ENCODE measurements at regions of chr6 and their contacts with region 1.

Region 1: GRCh38 chr6:148464319-148465010 is 121.8 kb downstream of the SASH1 start:
- DNase-seq: peak in 2 of 3 donors; percentile 57 to 81
- ATAC-seq: peak; percentile 75
- H3K4me3 ChIP-seq: no peak overlapping the region
- H3K4me1 ChIP-seq: no peaks in the 10 kb centered on the region
- CTCF ChIP-seq: peak; percentile 85

Region 2: DNA sequence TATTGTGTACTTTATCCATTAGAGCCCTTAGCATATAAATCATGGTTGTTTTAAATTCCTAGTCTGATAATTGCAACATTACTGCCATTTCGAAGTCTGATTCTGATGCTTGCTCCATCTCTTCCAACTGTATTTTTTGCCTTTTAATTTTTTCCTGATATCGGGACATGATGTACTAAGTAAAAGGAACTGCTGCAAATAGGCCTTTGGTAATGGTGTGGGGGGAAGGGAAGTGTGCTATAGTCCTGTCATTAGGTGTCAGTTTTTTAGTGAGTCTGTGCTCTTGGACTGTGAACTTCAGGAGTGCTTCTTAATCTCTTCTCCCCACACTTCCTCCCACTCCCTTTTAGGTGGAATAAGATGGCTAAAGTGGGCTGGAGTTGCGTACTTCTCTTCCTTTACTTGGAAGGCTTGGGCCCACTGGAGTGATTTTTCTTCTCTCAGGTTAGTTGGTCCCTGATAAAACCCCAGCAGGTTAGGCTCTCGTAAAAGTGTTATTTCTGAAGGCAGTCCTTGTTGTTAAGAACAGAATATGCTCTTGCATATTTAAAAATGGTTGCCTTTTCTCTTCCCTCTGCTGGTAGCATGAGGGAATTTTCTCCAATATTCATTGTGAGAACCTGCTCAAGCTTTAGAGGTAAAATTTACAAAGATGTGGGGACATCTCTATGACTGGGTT is 1242.2 kb before region 1 on chr6:
- intact Hi-C with region 1: no loop called
- DNase-seq: no peak
- ATAC-seq: peak; percentile 65
- H3K4me3 ChIP-seq: no peak overlapping the region
- H3K4me1 ChIP-seq: peaks cover 27% of the 10 kb centered on the region
- CTCF ChIP-seq: no peak

Region 3: DNA sequence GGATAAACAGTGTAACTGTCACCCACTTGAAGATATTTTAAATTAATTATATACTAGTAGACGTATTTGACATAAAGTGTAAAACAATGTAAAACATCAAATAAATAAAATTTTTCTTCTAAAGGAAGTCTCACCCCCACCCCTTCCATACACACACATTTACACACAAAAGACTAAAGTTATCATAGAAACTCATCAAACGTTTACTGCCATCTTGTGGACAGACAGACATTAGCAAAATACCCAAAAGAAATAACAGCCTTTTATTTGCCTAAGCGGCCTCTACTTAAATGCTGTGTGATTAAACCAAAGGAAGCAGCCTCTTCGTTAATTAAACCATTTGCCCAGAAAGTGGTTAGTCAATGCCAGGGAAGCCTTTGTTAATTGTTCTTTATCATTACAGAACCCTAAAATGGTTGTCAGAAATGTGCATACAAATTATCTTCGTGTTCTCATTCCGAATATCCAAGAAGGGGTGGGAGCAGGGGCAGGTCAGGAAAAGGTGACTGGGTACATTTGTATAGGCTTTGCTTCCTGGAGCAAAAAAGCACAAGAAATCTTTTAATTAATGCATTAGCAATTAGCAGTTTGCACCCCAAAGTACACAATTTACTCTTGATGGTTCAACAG is 298.0 kb before region 1 on chr6:
- intact Hi-C with region 1: loop called in 1 of 2 experiments (anchors 5 kb)
- DNase-seq: peak in 1 of 3 donors; percentile 32
- ATAC-seq: no peak
- H3K4me3 ChIP-seq: no peak overlapping the region
- H3K4me1 ChIP-seq: no peaks in the 10 kb centered on the region
- CTCF ChIP-seq: no peak

Measured in mucosa of descending colon (tissue), 3 donors.